ENCODE measurements at regions of chr2 and their contacts with region 1.

Region 1: GRCh38 chr2:42127425-42128424 is 41.4 kb upstream of the EML4 start:
- DNase-seq: peak in 2 of 3 donors; percentile 64 to 72
- H3K4me3 ChIP-seq: no peak overlapping the region
- H3K27ac ChIP-seq: no peak overlapping the region
- H3K4me1 ChIP-seq: peaks cover 27 to 69% (median 53%) of the 10 kb centered on the region in 4 experiments
- H3K27me3 ChIP-seq: peaks cover 0 to 30% (median 22%) of the 10 kb centered on the region in 5 experiments

Region 2: GRCh38 chr2:42105330-42106256 is 22.1 kb before region 1 on chr2:
- CTCF ChIA-PET with region 1: interaction called, 13 read pairs
- POLR2A ChIA-PET with region 1: interaction called, 3 read pairs
- DNase-seq: peak in 2 of 3 donors; percentile 51 to 62
- H3K4me3 ChIP-seq: no peak overlapping the region
- H3K27ac ChIP-seq: no peak overlapping the region
- H3K4me1 ChIP-seq: peaks cover 5 to 34% (median 23%) of the 10 kb centered on the region in 4 experiments
- H3K27me3 ChIP-seq: peaks cover 0 to 26% (median 15%) of the 10 kb centered on the region in 5 experiments

Region 3: GRCh38 chr2:42256505-42256904 is 128.8 kb after region 1 on chr2:
- CTCF ChIA-PET with region 1: no interaction called
- POLR2A ChIA-PET with region 1: no interaction called
- DNase-seq: peak in 2 of 3 donors; percentile 27 to 50
- H3K4me3 ChIP-seq: peak overlapping the region in 2 of 7 experiments; percentile 24 to 45
- H3K27ac ChIP-seq: peak overlapping the region in 1 of 2 experiments; percentile 19
- H3K4me1 ChIP-seq: peaks cover 0 to 11% (median 7%) of the 10 kb centered on the region in 4 experiments
- H3K27me3 ChIP-seq: no peaks in the 10 kb centered on the region

Region 4: GRCh38 chr2:42312110-42312509 is 184.4 kb after region 1 on chr2:
- CTCF ChIA-PET with region 1: no interaction called
- POLR2A ChIA-PET with region 1: no interaction called
- DNase-seq: no peak
- H3K4me3 ChIP-seq: no peak overlapping the region
- H3K27ac ChIP-seq: no peak overlapping the region
- H3K4me1 ChIP-seq: peaks cover 0 to 6% (median 0%) of the 10 kb centered on the region in 4 experiments
- H3K27me3 ChIP-seq: no peaks in the 10 kb centered on the region

Measured in common myeloid progenitor, CD34-positive (primary cell).